A673 (cell line): ENCODE measurements at regions of chr7 and their contacts with region 1.

Region 1: GRCh38 chr7:113698556-113699220 is 220.1 kb downstream of the PPP1R3A start:
- DNase-seq: peak; percentile 56
- H3K4me3 ChIP-seq: no peak overlapping the region
- H3K27ac ChIP-seq: no peak overlapping the region
- H3K4me1 ChIP-seq: no peaks in the 10 kb centered on the region
- H3K27me3 ChIP-seq: peaks cover 16% of the 10 kb centered on the region
- CTCF ChIP-seq: peak; percentile 83

Region 2: DNA sequence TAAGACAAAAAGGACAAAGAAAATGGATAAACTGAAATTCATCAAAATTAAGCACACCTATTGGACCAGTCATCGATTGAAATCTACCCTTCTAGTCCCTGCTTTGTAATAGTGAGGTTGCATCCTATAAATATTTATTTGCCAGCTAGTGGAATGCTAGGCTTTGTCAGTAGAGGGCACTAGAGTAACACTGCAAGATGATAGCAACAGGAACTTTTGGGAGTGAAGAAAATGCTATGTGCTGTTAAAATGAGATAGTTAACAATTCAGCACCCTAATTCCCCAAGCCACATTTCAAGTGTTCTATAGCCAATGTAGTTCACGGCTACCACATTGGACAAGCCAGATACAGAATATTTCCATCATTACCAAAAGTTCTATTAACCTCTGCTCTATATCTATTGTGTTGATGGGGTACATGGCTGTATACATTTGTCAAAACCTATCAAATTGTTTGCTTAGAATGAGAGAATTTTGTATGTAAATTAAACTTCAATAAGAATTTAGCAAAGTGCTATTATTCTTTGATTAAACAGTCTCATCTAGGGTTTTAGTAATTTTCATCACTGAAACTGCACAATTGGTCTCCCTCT is 1148.1 kb before region 1 on chr7:
- CTCF ChIA-PET with region 1: no interaction called
- POLR2A ChIA-PET with region 1: no interaction called
- intact Hi-C with region 1: loop called (anchors 5 kb)
- DNase-seq: peak; percentile 76
- H3K4me3 ChIP-seq: no peak overlapping the region
- H3K27ac ChIP-seq: no peak overlapping the region
- H3K4me1 ChIP-seq: no peaks in the 10 kb centered on the region
- H3K27me3 ChIP-seq: peaks cover 14% of the 10 kb centered on the region
- CTCF ChIP-seq: peak; percentile 94

Region 3: DNA sequence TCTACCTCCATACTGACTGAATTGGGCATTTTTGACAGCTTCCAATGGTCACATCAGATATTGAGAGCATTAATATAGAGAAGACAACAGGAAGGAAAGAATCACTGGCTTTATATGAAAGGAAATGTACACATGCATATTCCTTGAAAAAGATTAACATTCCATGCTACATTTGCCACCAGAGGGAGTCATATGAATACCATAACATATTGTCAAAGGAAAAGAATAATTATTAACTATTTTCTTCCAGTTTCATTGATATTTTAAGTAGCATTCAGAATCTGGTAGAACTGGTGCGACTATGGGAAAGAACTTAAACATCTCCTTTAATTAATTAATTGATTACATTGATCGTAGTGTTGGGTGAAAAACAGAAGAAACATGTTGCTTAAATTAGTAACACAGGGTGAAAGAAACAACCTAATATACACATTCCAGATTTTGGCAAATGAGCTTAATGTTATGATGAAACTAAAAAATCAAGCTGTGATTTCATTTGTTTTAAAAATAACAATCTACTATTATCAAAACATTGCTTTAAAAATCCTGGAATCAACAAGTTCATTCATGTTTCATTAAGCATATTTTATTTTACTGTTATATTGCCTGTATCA is 683.5 kb before region 1 on chr7:
- CTCF ChIA-PET with region 1: no interaction called
- POLR2A ChIA-PET with region 1: no interaction called
- intact Hi-C with region 1: loop called (anchors 2 kb)
- DNase-seq: peak; percentile 15
- H3K4me3 ChIP-seq: no peak overlapping the region
- H3K27ac ChIP-seq: no peak overlapping the region
- H3K4me1 ChIP-seq: no peaks in the 10 kb centered on the region
- H3K27me3 ChIP-seq: no peaks in the 10 kb centered on the region
- CTCF ChIP-seq: peak; percentile 59

Region 4: GRCh38 chr7:113159746-113160339 is 538.8 kb before region 1 on chr7:
- CTCF ChIA-PET with region 1: no interaction called
- POLR2A ChIA-PET with region 1: no interaction called
- intact Hi-C with region 1: loop called (anchors 5 kb)
- DNase-seq: peak; percentile 49
- H3K4me3 ChIP-seq: no peak overlapping the region
- H3K27ac ChIP-seq: no peak overlapping the region
- H3K4me1 ChIP-seq: no peaks in the 10 kb centered on the region
- H3K27me3 ChIP-seq: peaks cover 5% of the 10 kb centered on the region
- CTCF ChIP-seq: peak; percentile 73

Region 5: GRCh38 chr7:113404245-113404644 is 294.4 kb before region 1 on chr7:
- CTCF ChIA-PET with region 1: no interaction called
- POLR2A ChIA-PET with region 1: no interaction called
- intact Hi-C with region 1: loop called (anchors 5 kb)
- DNase-seq: peak; percentile 33
- H3K4me3 ChIP-seq: no peak overlapping the region
- H3K27ac ChIP-seq: no peak overlapping the region
- H3K4me1 ChIP-seq: no peaks in the 10 kb centered on the region
- H3K27me3 ChIP-seq: no peaks in the 10 kb centered on the region
- CTCF ChIP-seq: peak; percentile 45

Region 6: DNA sequence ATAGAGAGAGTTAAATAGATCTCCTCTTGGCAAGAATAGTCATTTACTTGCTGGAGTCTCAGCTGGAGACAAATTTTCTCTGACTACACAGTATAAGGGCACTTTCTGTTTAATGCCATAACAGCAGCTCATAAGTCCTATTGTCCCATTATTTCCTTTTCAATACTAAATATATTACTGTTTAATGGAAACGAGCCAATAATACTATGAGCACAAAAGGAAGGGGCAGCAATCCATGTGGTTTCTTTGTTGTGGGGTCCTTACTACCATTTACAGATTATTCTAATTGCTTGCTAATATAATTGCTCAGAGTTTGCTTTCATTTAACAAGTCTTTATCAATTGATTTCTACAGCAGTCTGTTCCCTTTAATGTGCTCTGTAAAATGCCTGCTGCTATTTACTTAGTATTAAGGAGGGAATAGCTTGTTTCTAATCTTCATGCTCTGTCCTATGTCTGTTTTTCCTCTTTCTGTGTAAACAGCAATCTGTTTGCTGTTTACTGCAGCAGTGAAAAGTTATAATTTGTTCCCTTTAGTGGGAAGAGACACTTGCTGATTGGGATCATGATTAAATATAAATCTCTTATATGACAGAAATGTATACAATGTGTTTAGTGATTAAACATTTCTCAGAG is 284.2 kb before region 1 on chr7:
- CTCF ChIA-PET with region 1: no interaction called
- POLR2A ChIA-PET with region 1: no interaction called
- intact Hi-C with region 1: no loop called
- DNase-seq: peak; percentile 2
- H3K4me3 ChIP-seq: no peak overlapping the region
- H3K27ac ChIP-seq: no peak overlapping the region
- H3K4me1 ChIP-seq: no peaks in the 10 kb centered on the region
- H3K27me3 ChIP-seq: no peaks in the 10 kb centered on the region
- CTCF ChIP-seq: no peak

Region 7: DNA sequence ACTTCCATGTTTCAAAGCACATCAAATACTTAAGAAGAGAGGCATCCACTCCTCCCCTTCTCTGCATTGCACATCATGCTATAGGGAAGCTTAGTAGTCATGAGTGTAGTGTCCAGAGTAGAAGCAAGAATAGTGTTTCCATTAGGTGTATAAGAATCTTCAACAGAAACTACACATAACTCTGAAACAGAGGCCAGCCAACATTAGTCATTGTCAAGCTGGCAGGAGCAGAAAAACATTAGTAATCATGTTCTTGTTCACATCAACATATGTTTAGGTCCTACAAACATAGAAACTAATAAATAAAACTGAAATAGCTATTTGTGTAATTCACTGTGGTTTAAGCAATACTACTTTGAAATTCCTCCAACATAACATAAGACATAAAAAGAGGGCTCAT is 150.1 kb before region 1 on chr7:
- CTCF ChIA-PET with region 1: no interaction called
- POLR2A ChIA-PET with region 1: no interaction called
- intact Hi-C with region 1: no loop called
- DNase-seq: no peak
- H3K4me3 ChIP-seq: no peak overlapping the region
- H3K27ac ChIP-seq: no peak overlapping the region
- H3K4me1 ChIP-seq: no peaks in the 10 kb centered on the region
- H3K27me3 ChIP-seq: no peaks in the 10 kb centered on the region
- CTCF ChIP-seq: no peak

Region 8: GRCh38 chr7:113657603-113658002 is 41.1 kb before region 1 on chr7:
- CTCF ChIA-PET with region 1: no interaction called
- POLR2A ChIA-PET with region 1: no interaction called
- intact Hi-C with region 1: no loop called
- DNase-seq: no peak
- H3K4me3 ChIP-seq: no peak overlapping the region
- H3K27ac ChIP-seq: no peak overlapping the region
- H3K4me1 ChIP-seq: no peaks in the 10 kb centered on the region
- H3K27me3 ChIP-seq: no peaks in the 10 kb centered on the region
- CTCF ChIP-seq: no peak